ENCODE measurements at regions of chr11 and their contacts with region 1.

Region 1: DNA sequence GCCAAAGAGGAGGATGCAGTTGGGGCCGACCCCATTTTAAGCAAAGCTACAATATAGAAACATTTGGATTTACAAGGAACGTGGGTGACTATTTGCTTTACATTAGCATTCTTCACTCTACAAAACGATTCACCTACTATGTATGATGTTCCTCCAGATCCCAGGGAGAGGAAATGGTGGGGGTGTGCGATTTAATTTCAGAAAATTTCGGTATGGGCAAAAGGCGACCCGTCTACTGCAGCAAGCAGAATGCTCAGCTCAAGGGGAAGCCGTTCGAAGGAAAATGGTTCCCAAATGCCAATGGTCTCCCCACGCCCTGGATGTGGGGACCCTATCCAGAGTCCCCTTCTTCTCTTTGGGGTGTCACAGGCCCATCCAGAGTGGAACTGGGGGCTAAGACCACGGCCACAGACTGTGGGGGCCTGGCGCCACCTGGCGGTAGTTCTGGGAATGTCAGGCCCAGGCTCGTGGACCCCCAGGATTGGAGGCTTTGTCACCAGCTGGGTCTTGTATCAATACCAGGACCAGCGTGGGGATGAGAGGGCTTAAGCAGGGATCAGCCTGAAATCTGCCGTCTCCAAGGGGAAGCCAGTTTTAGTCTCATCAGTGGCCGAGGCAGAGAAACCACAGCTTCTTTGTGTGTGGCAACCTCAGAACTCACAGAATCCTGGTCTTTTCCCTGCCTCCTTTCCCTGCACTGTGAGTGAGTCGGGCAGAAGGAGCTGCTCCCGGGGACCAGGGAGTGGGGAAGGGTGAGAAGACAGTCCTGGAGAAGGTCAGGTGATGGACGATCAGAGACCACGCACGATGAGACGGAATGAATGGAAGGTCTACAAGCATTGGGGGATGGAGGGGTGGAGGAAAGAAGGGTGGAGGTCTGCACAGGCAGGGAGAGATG is 8.4 kb downstream of the LRRC10B start:
- DNase-seq: peak; percentile 61 to 90 (median 84)
- ATAC-seq: peak; percentile 75
- H3K4me3 ChIP-seq: no peak overlapping the region
- H3K27ac ChIP-seq: no peak overlapping the region
- H3K4me1 ChIP-seq: peaks cover 0 to 14% of the 10 kb centered on the region in 2 experiments; a peak in 4 of 5 replicates
- H3K27me3 ChIP-seq: peaks cover 27 to 60% of the 10 kb centered on the region in 2 experiments; a peak in 4 of 5 replicates
- CTCF ChIP-seq: peak; percentile 86 to 99 (median 91)
- EP300 ChIP-seq: no peak
- POLR2A ChIP-seq: no peak
- RAD21 ChIP-seq: peak; percentile 75 to 92

Region 2: DNA sequence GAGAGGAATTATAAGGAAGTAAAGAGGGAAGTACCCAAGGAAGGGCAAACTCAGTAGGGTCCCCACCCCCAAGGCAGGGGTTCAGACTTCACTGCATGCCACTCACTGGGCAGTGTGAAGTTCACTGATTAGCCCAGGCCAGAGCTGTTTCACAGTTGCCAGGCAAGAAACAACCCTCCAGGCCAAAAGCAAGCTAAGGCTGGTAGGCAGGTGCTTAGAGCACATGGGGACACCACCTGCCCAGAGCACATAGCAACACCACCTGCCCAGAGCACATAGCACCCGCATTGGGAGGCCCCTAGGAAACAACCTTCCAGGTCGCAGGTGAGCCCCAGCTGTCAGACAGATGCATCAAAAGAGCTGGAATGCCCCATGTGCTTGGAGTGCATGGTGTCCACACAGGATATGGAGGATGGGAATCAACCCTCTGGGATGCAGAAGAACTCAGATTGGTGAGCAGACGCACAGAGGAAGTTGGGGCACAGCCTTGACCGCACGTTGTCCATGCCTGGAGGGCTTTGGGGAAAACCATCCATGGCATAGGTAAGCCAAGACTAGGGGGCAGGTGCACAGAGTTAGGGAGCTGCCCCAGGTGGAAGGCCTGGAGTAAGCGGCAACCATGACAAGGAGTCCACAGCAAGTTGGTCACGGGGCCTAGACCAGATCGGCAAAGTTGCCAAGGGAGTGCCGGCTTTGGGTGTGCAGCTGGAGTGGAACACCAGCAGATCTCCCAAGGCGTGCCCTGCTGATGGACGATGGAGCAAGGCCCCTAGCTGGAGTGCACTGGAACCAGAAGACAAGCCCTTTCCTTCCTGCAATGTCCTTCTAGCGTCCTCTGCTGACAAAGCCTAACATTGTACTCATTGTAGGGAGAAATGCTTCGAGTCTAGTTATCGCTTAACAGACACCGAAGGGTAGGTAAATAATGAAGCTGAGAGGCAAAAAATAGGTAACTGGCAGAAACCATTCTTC is 132.4 kb before region 1 on chr11:
- CTCF ChIA-PET with region 1: no interaction called
- POLR2A ChIA-PET with region 1: no interaction called
- in situ Hi-C with region 1: no loop called
- intact Hi-C with region 1: no loop called
- DNase-seq: peak; percentile 36 to 82 (median 54)
- ATAC-seq: peak; percentile 95
- H3K4me3 ChIP-seq: no peak overlapping the region
- H3K27ac ChIP-seq: no peak overlapping the region
- H3K4me1 ChIP-seq: peaks cover 3 to 6% of the 10 kb centered on the region in 2 experiments; a peak in 2 of 5 replicates
- H3K27me3 ChIP-seq: no peaks in the 10 kb centered on the region
- CTCF ChIP-seq: peak; percentile 84 to 97 (median 91)
- EP300 ChIP-seq: no peak
- POLR2A ChIP-seq: no peak
- RAD21 ChIP-seq: peak; percentile 89 to 98

Region 3: GRCh38 chr11:61446211-61446651 is 70.7 kb before region 1 on chr11:
- CTCF ChIA-PET with region 1: interaction called, 14 read pairs
- POLR2A ChIA-PET with region 1: interaction called, 8 read pairs
- in situ Hi-C with region 1: no loop called
- intact Hi-C with region 1: loop called (anchors 1 kb)
- DNase-seq: peak; percentile 64 to 86 (median 74)
- ATAC-seq: peak; percentile 99
- H3K4me3 ChIP-seq: no peak overlapping the region
- H3K27ac ChIP-seq: no peak overlapping the region
- H3K4me1 ChIP-seq: peaks cover 0 to 4% of the 10 kb centered on the region in 2 experiments; a peak in 2 of 5 replicates
- H3K27me3 ChIP-seq: no peaks in the 10 kb centered on the region; a peak in 1 of 5 replicates
- CTCF ChIP-seq: peak; percentile 82 to 90 (median 89)
- EP300 ChIP-seq: no peak
- POLR2A ChIP-seq: no peak
- RAD21 ChIP-seq: peak; percentile 40 to 67; a peak in 3 of 4 replicates

Region 4: DNA sequence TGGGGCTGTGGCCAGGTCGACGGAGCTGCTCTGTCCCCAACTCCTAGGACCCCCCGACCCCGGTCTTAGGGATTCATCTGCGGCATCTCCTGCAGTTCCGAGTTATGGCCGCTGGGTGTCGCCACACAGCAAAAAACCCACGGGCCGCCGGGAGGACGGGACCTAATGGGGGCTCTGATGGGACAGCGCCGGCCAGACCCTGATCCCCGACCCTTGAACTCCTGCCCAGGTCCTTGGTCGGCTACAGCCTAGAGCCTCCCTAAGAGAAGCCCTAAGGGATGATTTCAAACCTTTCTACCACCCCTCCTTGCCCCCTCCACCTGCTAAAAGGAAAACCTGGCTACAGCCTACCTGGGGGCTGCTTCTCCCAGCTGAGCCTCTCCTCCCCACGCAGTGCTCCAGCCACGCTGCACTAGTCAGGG is 39.2 kb before region 1 on chr11:
- CTCF ChIA-PET with region 1: interaction called, 23 read pairs
- POLR2A ChIA-PET with region 1: interaction called, 3 read pairs
- in situ Hi-C with region 1: no loop called
- intact Hi-C with region 1: loop called (anchors 1 kb)
- DNase-seq: peak; percentile 65 to 82 (median 78)
- ATAC-seq: peak; percentile 59
- H3K4me3 ChIP-seq: no peak overlapping the region
- H3K27ac ChIP-seq: no peak overlapping the region
- H3K4me1 ChIP-seq: peaks cover 0 to 26% of the 10 kb centered on the region in 2 experiments; a peak in 3 of 5 replicates
- H3K27me3 ChIP-seq: peaks cover 11 to 33% of the 10 kb centered on the region in 2 experiments; a peak in 4 of 5 replicates
- CTCF ChIP-seq: peak; percentile 87 to 90 (median 89)
- EP300 ChIP-seq: no peak
- POLR2A ChIP-seq: no peak
- RAD21 ChIP-seq: peak; percentile 75 to 86

Region 5: GRCh38 chr11:61489833-61490721 is 26.8 kb before region 1 on chr11:
- CTCF ChIA-PET with region 1: no interaction called
- POLR2A ChIA-PET with region 1: no interaction called
- in situ Hi-C with region 1: no loop called
- intact Hi-C with region 1: no loop called
- DNase-seq: peak in 3 of 4 experiments; percentile 43 to 61 (median 54)
- ATAC-seq: peak; percentile 71
- H3K4me3 ChIP-seq: no peak overlapping the region
- H3K27ac ChIP-seq: no peak overlapping the region
- H3K4me1 ChIP-seq: peaks cover 3 to 18% of the 10 kb centered on the region in 2 experiments; a peak in 3 of 5 replicates
- H3K27me3 ChIP-seq: peaks cover 26 to 83% of the 10 kb centered on the region in 2 experiments; a peak in 4 of 5 replicates
- CTCF ChIP-seq: no peak
- EP300 ChIP-seq: no peak
- POLR2A ChIP-seq: no peak
- RAD21 ChIP-seq: no peak

Region 6: DNA sequence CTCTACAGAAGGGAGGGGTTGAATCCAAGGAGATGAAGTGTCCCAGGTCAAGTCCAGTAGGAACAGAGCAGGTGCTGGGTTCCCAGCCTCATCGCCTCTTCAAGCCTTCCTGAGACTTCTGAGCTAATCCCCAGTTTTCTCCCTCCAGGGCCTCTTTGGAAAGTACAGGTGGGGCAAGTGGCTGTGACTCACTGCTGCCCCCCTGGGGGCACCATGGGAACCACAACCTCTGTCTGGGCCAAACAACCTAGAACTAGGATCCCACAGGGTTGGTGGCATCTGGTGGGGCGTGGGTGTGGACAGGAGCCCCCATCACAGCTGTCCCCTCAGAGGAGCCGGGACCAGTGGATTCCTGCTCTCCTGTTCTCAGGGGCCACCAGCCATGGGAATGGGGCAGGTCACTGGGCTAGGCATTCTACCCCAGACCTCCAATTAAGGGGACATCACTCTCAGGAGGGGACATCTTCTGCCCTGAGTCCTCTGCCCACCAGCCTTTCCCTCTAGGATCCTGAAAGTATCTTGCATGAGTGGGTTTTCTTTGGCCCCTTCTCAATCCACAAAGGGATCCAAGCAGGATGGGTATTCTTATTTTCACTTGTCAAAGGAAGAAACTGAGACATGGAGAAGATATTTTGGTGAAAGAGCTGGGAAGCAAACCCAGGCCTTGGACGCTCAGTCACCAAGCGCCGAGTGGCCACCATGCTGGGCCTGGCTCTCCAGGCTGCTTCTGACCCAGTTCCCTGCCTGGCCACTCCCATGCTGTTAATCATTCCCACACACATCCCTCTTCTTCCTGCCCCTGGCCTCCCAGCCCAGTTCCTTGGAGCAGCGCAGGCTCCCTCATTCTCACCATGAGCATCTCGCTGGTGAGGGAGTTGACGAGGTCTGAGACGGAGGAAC is 15.5 kb after region 1 on chr11:
- CTCF ChIA-PET with region 1: no interaction called
- POLR2A ChIA-PET with region 1: no interaction called
- in situ Hi-C with region 1: no loop called
- intact Hi-C with region 1: no loop called
- DNase-seq: peak; percentile 71 to 88 (median 85)
- ATAC-seq: peak; percentile 90
- H3K4me3 ChIP-seq: no peak overlapping the region
- H3K27ac ChIP-seq: no peak overlapping the region
- H3K4me1 ChIP-seq: peaks cover 0 to 15% of the 10 kb centered on the region in 2 experiments; a peak in 2 of 5 replicates
- H3K27me3 ChIP-seq: peaks cover 33 to 72% of the 10 kb centered on the region in 2 experiments; a peak in 4 of 5 replicates
- CTCF ChIP-seq: peak; percentile 86 to 95 (median 90)
- EP300 ChIP-seq: no peak
- POLR2A ChIP-seq: no peak
- RAD21 ChIP-seq: peak; percentile 19 to 61; a peak in 2 of 4 replicates

Measured in K562 (cell line).